ENCODE measurements at regions of chr15 and their contacts with region 1.

Region 1: DNA sequence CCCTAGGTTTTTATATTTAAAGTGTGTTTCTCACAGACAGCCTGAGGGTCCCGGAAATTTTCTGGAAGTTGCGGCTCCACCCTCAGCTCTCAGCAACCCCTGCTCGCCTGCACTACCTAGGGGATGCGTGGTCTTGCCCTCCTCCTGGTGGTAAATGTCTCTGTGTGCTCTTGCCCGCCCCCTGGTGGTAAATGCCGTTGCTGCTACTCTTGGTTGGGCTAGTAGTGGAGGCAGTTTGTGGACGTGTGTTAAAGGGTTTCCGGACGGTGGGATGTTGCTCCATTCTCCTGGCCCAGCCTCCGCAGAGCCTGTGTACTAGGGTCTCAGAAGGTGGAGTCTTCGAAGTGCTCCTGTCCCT is 27.4 kb downstream of the STOML1 start:
- DNase-seq: peak; percentile 94
- ATAC-seq: peak; percentile 96
- H3K4me3 Mint-ChIP-seq: peak overlapping the region; percentile 50
- H3K27ac Mint-ChIP-seq: no peak overlapping the region
- H3K4me1 Mint-ChIP-seq: peaks cover 27% of the 10 kb centered on the region
- H3K27me3 Mint-ChIP-seq: no peaks in the 10 kb centered on the region
- CTCF ChIP-seq: peak; percentile 91

Region 2: DNA sequence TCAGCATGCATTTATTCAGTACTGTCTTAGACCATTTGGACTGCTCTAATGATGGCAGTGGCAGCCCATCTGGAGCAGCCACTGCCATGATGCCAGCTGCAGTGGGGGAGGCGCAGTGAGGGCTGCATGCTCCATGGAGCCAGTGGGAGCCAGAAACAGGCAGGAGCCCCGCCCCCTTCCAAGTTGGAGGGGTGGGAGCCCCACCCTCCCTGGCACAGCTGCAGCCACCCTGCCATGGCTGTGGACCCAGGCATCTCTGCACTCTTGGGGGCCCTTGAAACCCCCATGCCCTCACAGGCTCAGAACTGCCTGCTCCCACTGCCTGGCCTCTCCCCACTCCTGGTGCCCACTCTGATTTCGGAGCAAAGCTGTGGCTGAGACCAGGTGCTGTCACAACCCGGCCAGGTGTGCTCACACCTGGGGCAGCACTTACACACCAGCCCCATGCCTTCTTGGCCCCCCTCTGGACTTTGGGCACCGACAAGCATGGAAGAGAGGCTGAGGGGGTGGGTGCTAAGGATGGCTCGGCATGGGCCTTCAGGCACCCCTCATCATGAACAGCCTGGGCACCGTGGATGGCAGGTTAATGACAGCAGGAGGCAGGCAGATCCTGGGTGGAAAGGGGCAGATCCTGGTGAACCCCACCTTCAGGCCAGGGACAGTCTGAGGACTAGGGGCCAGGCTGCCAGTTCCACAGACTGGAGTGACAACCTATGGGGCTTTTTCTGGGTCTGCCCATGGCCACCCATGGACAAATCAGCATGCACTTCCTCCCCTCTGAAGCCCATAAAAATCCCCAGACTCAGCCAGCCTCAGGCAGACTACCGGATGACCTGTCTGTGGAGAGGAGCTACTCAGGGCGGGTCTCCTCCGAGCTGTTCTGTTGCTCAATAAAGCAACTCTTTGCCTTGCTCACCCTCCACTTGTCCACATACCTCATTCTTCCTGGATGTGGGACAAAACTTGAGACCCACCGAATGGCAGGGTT is 73.1 kb before region 1 on chr15:
- CTCF ChIA-PET with region 1: interaction called, 10 read pairs
- POLR2A ChIA-PET with region 1: no interaction called
- DNase-seq: no peak
- ATAC-seq: no peak
- H3K4me3 Mint-ChIP-seq: no peak overlapping the region
- H3K27ac Mint-ChIP-seq: no peak overlapping the region
- H3K4me1 Mint-ChIP-seq: peaks cover 12% of the 10 kb centered on the region
- H3K27me3 Mint-ChIP-seq: peaks cover 4% of the 10 kb centered on the region; the same call in 1 of the 2 replicates
- CTCF ChIP-seq: no peak

Region 3: DNA sequence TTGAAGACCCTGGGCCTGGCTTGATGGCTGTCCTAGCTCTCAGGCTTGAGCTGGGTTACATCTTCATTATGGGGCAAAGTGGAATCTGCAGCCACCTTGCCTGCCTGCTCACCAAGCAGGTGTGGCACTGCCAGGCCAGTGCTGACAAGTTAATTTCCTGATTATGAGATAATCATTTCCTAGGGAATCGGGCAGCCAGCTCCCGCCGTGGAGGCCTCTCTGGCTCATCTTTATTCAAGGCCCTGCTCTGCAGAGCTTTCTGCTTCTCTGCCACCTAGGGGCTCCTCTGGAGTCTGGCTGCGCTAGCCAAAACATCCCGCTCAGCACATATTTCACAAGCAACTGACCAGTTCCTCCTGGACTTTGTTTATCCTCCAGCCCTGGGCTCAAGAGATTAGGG is 28.5 kb before region 1 on chr15:
- CTCF ChIA-PET with region 1: interaction called, 12 read pairs
- POLR2A ChIA-PET with region 1: no interaction called
- DNase-seq: no peak
- ATAC-seq: peak; percentile 33; the same call in 1 of the 2 replicates
- H3K4me3 Mint-ChIP-seq: no peak overlapping the region
- H3K27ac Mint-ChIP-seq: no peak overlapping the region
- H3K4me1 Mint-ChIP-seq: peaks cover 14% of the 10 kb centered on the region
- H3K27me3 Mint-ChIP-seq: no peaks in the 10 kb centered on the region
- CTCF ChIP-seq: no peak